CD4-positive, alpha-beta memory T cell (primary cell): ENCODE measurements at regions of chr15 and their contacts with region 1.

Region 1: DNA sequence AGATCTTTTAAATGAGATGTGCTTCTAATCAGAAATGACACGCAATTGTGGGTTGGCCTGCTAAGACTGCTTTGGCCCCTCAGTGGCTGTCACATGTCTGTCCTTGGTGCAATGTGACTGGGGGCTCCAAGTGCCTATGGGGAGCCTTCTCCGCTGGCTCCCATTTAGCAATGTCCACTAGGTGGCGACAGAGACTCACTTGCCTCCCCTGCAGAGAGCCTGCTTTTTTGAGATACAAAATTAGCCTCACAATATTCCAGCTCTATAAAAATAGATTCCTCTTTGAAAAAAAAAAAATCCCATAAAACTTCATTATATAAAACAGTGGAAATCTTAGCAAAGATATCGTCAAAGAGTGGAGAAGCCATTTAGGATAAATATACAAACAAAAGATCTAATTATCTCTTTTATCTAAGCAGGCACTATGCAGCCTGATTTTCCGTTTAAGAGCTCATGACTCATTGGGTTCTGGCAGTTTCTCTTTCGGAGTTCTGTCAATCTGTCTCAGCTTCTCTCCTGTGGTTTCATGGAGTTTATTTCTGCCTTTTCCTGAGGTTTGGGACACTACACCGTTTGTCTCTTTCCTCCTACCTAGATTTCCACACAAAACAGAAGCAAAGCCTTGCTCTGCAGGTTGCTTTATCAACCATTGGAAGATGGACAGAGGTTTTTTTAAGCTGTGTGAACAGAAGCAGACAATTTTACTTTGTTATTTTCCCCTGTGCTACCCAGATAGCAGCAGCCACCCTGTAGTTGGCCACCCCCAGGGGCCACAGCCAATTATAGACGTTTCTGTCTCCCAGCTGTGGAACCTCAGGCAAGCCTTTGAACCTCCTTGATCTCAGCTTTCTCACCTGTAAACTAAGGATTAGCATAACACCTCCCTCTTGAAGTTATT is 68.4 kb upstream of the TNFAIP8L3 start:
- DNase-seq: peak in 4 of 5 donors; percentile 24 to 38 (median 28)
- H3K4me3 ChIP-seq: no peak overlapping the region
- H3K4me3 Mint-ChIP-seq: peak overlapping the region in 1 of 8 donors; percentile 58
- H3K27ac ChIP-seq: no peak overlapping the region
- H3K27ac Mint-ChIP-seq: no peak overlapping the region
- H3K4me1 ChIP-seq: no peaks in the 10 kb centered on the region
- H3K4me1 Mint-ChIP-seq: peaks cover 0 to 2% (median 0%) of the 10 kb centered on the region in 4 donors
- H3K27me3 ChIP-seq: no peaks in the 10 kb centered on the region
- H3K27me3 Mint-ChIP-seq: peaks cover 9 to 17% of the 10 kb centered on the region in 2 donors

Region 2: GRCh38 chr15:51192521-51193280 is 29.6 kb after region 1 on chr15:
- CTCF ChIA-PET with region 1: interaction called, 14 read pairs
- POLR2A ChIA-PET with region 1: no interaction called
- intact Hi-C with region 1: loop called (anchors 1 kb)
- DNase-seq: peak; percentile 31 to 53 (median 38)
- H3K4me3 ChIP-seq: no peak overlapping the region
- H3K4me3 Mint-ChIP-seq: no peak overlapping the region
- H3K27ac ChIP-seq: no peak overlapping the region
- H3K27ac Mint-ChIP-seq: no peak overlapping the region
- H3K4me1 ChIP-seq: peaks cover 7% of the 10 kb centered on the region
- H3K4me1 Mint-ChIP-seq: peaks cover 3 to 5% (median 4%) of the 10 kb centered on the region in 4 donors
- H3K27me3 ChIP-seq: peaks cover 6% of the 10 kb centered on the region
- H3K27me3 Mint-ChIP-seq: peaks cover 16 to 33% of the 10 kb centered on the region in 2 donors

Region 3: DNA sequence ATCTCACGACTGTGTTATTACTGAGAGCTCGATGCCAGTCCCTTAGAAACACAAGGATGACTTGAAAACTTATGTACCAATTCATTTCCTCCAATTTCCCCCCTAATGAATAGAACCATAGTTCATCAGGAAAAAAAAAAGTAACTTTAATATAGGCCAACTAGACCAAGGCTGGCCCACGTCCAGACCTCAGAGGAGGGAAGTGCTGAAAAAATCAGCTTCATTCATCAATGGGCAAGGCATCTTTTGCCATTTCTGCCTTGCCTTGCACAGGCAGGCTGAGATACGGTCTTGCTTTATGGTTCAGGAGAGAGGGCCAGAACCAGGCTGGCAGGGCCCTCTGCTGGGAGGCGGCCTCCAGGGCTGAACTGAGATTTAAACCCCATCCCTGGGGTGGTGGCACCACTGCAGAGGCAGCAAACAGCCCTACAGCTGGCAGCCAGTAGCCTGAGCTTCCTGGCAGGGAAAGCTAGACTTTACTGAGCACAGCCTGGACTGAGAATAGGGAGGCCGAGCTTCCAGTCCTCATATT is 35.7 kb after region 1 on chr15:
- CTCF ChIA-PET with region 1: interaction called, 11 read pairs
- POLR2A ChIA-PET with region 1: no interaction called
- intact Hi-C with region 1: no loop called
- DNase-seq: no peak
- H3K4me3 ChIP-seq: no peak overlapping the region
- H3K4me3 Mint-ChIP-seq: no peak overlapping the region
- H3K27ac ChIP-seq: no peak overlapping the region
- H3K27ac Mint-ChIP-seq: no peak overlapping the region
- H3K4me1 ChIP-seq: no peaks in the 10 kb centered on the region
- H3K4me1 Mint-ChIP-seq: no peaks in the 10 kb centered on the region
- H3K27me3 ChIP-seq: no peaks in the 10 kb centered on the region
- H3K27me3 Mint-ChIP-seq: peaks cover 19 to 23% of the 10 kb centered on the region in 2 donors